PC-9 (cell line): ENCODE measurements at regions of chrX and their contacts with region 1.

Region 1: DNA sequence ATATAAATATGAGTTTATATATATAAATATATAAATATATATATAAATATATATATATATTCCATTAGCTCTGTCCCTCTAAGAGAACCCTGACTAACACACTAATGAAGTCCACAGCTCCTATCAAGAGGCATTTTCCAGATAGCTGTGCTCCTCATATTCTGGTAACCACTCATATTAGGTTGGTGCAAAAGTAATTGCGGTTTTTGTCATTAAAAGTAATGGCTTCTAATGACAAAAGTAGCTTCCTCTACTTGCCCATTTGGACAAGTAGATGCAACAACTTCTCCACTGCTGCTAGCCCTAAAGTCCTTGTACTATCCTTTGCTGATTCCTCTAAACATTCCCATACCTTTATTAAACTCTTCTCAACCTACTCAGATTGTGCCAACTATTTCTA is 182.0 kb downstream of the THOC2 start:
- DNase-seq: no peak
- H3K4me3 ChIP-seq: no peak overlapping the region
- H3K27ac ChIP-seq: no peak overlapping the region
- H3K4me1 ChIP-seq: no peaks in the 10 kb centered on the region
- H3K27me3 ChIP-seq: no peaks in the 10 kb centered on the region
- CTCF ChIP-seq: no peak

Region 2: GRCh38 chrX:123629502-123629901 is 78.7 kb after region 1 on chrX:
- CTCF ChIA-PET with region 1: no interaction called
- POLR2A ChIA-PET with region 1: interaction called, 10 read pairs
- intact Hi-C with region 1: no loop called
- DNase-seq: no peak
- H3K4me3 ChIP-seq: no peak overlapping the region
- H3K27ac ChIP-seq: 0 out of 2 replicates have a peak overlapping the region, but pooled peaks have one; percentile 3
- H3K4me1 ChIP-seq: no peaks in the 10 kb centered on the region
- H3K27me3 ChIP-seq: no peaks in the 10 kb centered on the region
- CTCF ChIP-seq: no peak

Region 3: DNA sequence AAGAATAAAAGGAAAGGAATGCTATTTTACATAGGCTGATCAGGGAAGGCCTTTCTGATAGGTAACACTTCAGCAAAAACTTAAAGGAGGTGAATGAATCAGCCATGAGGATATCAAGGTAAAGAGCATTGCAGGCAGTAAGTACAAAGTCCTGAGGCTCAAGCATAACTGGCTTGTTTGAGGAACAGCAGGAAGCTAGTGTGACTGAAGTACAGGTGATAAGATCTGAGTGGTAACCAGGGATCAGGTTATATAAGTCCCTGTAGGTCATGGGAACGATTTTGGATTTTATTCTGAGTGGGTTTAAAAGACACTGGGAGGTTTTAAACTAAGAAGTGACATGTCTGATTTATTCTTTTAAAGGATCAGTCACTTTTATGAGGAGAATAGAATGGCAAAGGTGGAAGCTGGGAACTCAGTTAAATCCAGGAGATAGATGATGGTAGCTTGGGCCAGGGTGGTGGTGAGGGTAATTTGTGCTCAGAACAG is 229.1 kb after region 1 on chrX:
- CTCF ChIA-PET with region 1: no interaction called
- POLR2A ChIA-PET with region 1: no interaction called
- intact Hi-C with region 1: no loop called
- DNase-seq: peak; percentile 14 to 90
- H3K4me3 ChIP-seq: no peak overlapping the region
- H3K27ac ChIP-seq: peak overlapping the region; percentile 78
- H3K4me1 ChIP-seq: peaks cover 26% of the 10 kb centered on the region
- H3K27me3 ChIP-seq: no peaks in the 10 kb centered on the region
- CTCF ChIP-seq: no peak

Region 4: GRCh38 chrX:123878252-123878721 is 327.5 kb after region 1 on chrX:
- CTCF ChIA-PET with region 1: no interaction called
- POLR2A ChIA-PET with region 1: no interaction called
- intact Hi-C with region 1: no loop called
- DNase-seq: no peak
- H3K4me3 ChIP-seq: no peak overlapping the region
- H3K27ac ChIP-seq: no peak overlapping the region
- H3K4me1 ChIP-seq: peaks cover 43% of the 10 kb centered on the region
- H3K27me3 ChIP-seq: no peaks in the 10 kb centered on the region
- CTCF ChIP-seq: no peak